PC-9 (cell line): ENCODE measurements at regions of chr1 and their contacts with region 1.

Region 1: DNA sequence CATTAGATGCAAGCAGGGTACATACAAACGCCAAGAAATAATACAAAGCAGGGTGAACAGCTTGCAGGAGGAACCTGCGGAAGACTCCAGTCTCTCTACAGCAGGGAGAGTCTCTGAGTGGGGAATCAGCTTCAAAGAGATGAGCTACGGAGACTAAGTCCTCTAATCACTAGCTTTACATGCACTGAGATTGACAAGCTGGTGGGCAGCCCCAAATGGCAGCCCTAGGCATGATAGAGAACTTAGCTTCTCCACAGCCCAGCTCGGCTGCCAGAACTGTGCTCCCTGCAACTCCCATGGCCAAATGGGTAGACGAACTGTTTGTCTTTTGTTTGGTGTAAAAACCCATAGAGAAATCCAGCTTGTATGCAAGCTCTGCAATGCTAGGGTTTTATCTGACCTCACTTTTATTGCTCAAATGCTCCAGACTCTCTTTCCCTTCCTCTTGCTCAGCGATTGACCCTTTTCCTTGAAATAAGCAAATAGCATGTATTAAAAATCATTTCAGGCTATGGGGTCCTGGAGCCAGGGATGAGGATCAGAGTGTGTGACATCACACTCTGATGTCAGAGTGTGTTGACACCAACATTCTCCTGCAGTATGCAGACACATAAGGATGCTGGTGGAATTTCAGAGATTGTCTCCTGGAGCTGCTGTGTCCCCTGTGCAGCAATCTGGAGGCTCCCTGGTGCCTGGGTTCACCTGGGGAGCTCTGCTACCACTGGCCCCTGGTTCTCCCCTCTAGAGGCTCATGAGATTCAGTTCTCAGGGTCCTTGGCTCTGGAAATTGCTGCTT is 238.5 kb downstream of the TTLL7 start:
- DNase-seq: no peak
- H3K4me3 ChIP-seq: no peak overlapping the region
- H3K27ac ChIP-seq: no peak overlapping the region
- H3K4me1 ChIP-seq: no peaks in the 10 kb centered on the region
- H3K27me3 ChIP-seq: 0 out of 2 replicates have a peak, but pooled peaks cover 9% of the 10 kb centered on the region
- CTCF ChIP-seq: no peak

Region 2: GRCh38 chr1:83626603-83627002 is 133.8 kb before region 1 on chr1:
- CTCF ChIA-PET with region 1: no interaction called
- POLR2A ChIA-PET with region 1: no interaction called
- intact Hi-C with region 1: no loop called
- DNase-seq: no peak
- H3K4me3 ChIP-seq: no peak overlapping the region
- H3K27ac ChIP-seq: no peak overlapping the region
- H3K4me1 ChIP-seq: no peaks in the 10 kb centered on the region
- H3K27me3 ChIP-seq: no peaks in the 10 kb centered on the region
- CTCF ChIP-seq: no peak

Region 3: GRCh38 chr1:83796409-83796808 is 36.0 kb after region 1 on chr1:
- CTCF ChIA-PET with region 1: no interaction called
- POLR2A ChIA-PET with region 1: interaction called, 14 read pairs
- intact Hi-C with region 1: no loop called
- DNase-seq: no peak
- H3K4me3 ChIP-seq: no peak overlapping the region
- H3K27ac ChIP-seq: no peak overlapping the region
- H3K4me1 ChIP-seq: no peaks in the 10 kb centered on the region
- H3K27me3 ChIP-seq: no peaks in the 10 kb centered on the region
- CTCF ChIP-seq: no peak

Region 4: GRCh38 chr1:84319662-84320061 is 559.2 kb after region 1 on chr1:
- CTCF ChIA-PET with region 1: no interaction called
- POLR2A ChIA-PET with region 1: interaction called, 10 read pairs
- intact Hi-C with region 1: no loop called
- DNase-seq: no peak
- H3K4me3 ChIP-seq: no peak overlapping the region
- H3K27ac ChIP-seq: no peak overlapping the region
- H3K4me1 ChIP-seq: no peaks in the 10 kb centered on the region
- H3K27me3 ChIP-seq: no peaks in the 10 kb centered on the region
- CTCF ChIP-seq: no peak